ENCODE measurements at regions of chr11 and their contacts with region 1.

Region 1: GRCh38 chr11:94134651-94135512 is 6.2 kb downstream of the PANX1 start:
- DNase-seq: peak; percentile 87
- H3K4me3 Mint-ChIP-seq: peak overlapping the region; percentile 46
- H3K27ac Mint-ChIP-seq: no peak overlapping the region
- H3K4me1 Mint-ChIP-seq: peaks cover 20% of the 10 kb centered on the region
- H3K27me3 Mint-ChIP-seq: no peaks in the 10 kb centered on the region
- CTCF ChIP-seq: no peak

Region 2: DNA sequence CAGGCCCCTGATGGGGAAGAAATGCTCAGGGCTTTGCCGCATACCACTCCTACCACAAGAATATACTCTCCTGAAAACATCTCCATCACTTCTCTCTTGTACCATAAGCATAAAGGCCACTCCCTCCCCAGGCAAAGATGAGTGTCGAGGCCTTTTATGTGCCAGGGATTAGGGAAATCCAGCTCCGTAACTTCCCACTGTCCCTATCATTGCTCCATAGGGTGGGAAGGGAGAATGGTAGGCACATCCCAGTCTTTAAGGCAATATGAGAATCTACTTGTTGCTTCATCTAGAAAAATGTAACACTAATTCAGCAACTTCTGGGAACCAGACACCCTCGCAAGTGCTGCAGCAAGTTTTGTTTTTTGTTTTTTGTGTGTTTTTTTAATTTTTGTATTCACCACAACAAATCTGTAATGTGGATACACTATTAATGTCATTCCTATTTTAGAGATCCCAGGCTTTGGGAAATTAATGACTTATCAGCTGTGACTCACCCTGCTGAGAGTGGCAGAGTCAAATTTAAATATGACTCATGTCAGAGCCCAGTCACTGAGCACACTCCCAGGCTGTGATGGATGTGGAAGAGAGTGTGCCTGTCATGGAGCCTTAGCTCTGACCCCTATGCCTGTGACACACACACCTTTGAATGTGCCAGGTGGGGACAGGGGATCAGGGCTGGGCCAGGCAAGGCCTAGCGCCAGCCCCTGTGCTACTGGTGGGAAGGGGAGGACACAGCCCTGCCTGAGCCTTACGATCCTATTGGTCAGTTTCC is 17.2 kb after region 1 on chr11:
- CTCF ChIA-PET with region 1: interaction called, 8 read pairs
- POLR2A ChIA-PET with region 1: interaction called, 19 read pairs
- intact Hi-C with region 1: loop called (anchors 2 kb)
- DNase-seq: peak; percentile 88
- H3K4me3 Mint-ChIP-seq: no peak overlapping the region
- H3K27ac Mint-ChIP-seq: no peak overlapping the region
- H3K4me1 Mint-ChIP-seq: peaks cover 57% of the 10 kb centered on the region
- H3K27me3 Mint-ChIP-seq: no peaks in the 10 kb centered on the region
- CTCF ChIP-seq: no peak

Measured in MCF 10A (cell line).